ENCODE measurements at regions of chr7 and their contacts with region 1.

Region 1: DNA sequence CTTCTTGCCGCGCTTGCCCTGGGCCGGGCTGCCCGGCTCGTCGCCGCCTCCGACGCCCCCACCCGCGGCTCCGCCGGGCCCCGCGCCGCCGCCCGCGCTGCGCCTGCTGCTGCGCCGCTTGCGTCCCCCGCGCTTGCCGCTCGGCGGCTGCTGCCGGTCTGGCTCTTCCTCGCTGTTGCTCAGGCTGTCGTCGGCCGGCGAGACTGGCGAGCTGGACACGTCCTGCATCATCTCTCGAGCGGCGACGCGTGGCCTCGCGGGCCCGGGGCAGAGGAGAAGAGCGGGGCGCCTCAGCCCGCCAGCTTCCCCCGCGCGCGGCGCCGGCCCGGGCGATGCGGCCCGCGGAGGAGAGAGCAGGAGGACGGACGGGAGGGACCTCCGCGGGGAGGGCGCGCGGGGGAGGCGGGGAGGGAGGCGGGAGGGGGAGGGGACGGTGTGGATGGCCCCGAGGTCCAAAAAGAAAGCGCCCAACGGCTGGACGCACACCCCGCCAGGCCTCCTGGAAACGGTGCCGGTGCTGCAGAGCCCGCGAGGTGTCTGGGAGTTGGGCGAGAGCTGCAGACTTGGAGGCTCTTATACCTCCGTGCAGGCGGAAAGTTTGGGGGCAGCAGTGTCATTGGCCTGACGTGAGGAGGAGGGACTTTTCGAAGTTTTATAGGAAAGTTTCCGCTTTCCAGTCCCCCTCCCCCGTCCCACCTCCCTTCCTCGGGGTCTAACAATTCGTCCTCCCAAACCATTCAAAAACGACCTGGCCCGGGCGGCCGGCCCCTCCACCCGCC is at the start of gene TWIST1:
- DNase-seq: peak; percentile 77
- ATAC-seq: peak; percentile 78
- H3K4me3 ChIP-seq: peak within 1 kb of the TSS; percentile 99
- H3K27ac ChIP-seq: no peak within 1 kb of the TSS
- H3K4me1 ChIP-seq: peaks cover 16% of the 10 kb centered on the region
- H3K27me3 ChIP-seq: no peaks in the 10 kb centered on the region
- CTCF ChIP-seq: no peak
- total RNA-seq, gene TWIST1: 15.7 and 22.3 TPM in 2 replicates

Region 2: GRCh38 chr7:18590744-18591340 is 526.4 kb before region 1 on chr7:
- CTCF ChIA-PET with region 1: no interaction called
- POLR2A ChIA-PET with region 1: interaction called, 27 read pairs
- intact Hi-C with region 1: loop called (anchors 5 kb)
- DNase-seq: peak; percentile 56
- ATAC-seq: peak; percentile 75
- H3K4me3 ChIP-seq: no peak overlapping the region
- H3K27ac ChIP-seq: no peak overlapping the region
- H3K4me1 ChIP-seq: no peaks in the 10 kb centered on the region
- H3K27me3 ChIP-seq: no peaks in the 10 kb centered on the region
- CTCF ChIP-seq: peak; percentile 76

Region 3: GRCh38 chr7:18895456-18895855 is 221.8 kb before region 1 on chr7:
- CTCF ChIA-PET with region 1: no interaction called
- POLR2A ChIA-PET with region 1: no interaction called
- intact Hi-C with region 1: loop called (anchors 2 kb)
- DNase-seq: peak; percentile 89
- ATAC-seq: peak; percentile 80
- H3K4me3 ChIP-seq: peak overlapping the region; percentile 64
- H3K27ac ChIP-seq: peak overlapping the region; percentile 84
- H3K4me1 ChIP-seq: peaks cover 54% of the 10 kb centered on the region
- H3K27me3 ChIP-seq: no peaks in the 10 kb centered on the region
- CTCF ChIP-seq: no peak

Region 4: DNA sequence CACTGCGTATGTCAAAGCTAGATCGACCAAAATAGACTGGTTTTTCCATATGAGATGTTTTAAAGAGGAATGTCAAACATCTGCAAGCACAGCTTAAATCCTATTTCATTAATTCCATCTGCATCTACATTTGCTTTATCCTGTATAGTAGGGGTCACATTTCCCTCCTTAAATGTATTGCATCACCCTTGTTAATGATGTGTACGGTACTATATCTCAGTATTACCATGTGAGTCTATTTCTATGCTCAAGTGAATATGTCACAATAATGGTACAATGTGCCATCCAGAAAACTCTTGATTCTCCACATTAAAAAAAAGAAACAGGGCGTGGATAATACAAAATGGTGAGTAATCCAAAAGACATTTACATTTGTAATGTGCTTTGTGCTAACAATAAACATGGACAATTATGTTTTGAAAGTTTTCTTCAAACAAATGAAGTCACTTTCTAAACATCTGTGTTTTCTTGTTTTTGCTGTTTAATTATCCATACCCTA is 56.5 kb before region 1 on chr7:
- CTCF ChIA-PET with region 1: no interaction called
- POLR2A ChIA-PET with region 1: no interaction called
- intact Hi-C with region 1: loop called (anchors 5 kb)
- DNase-seq: peak; percentile 68
- ATAC-seq: peak; percentile 87
- H3K4me3 ChIP-seq: no peak overlapping the region
- H3K27ac ChIP-seq: no peak overlapping the region
- H3K4me1 ChIP-seq: peaks cover 14% of the 10 kb centered on the region
- H3K27me3 ChIP-seq: no peaks in the 10 kb centered on the region
- CTCF ChIP-seq: no peak

Region 5: GRCh38 chr7:19404912-19405329 is 287.6 kb after region 1 on chr7:
- CTCF ChIA-PET with region 1: interaction called, 3 read pairs
- POLR2A ChIA-PET with region 1: no interaction called
- intact Hi-C with region 1: loop called (anchors 2 kb)
- DNase-seq: peak; percentile 96
- ATAC-seq: peak; percentile 96
- H3K4me3 ChIP-seq: peak overlapping the region; percentile 31; the same call in 1 of the 2 replicates
- H3K27ac ChIP-seq: peak overlapping the region; percentile 72
- H3K4me1 ChIP-seq: peaks cover 34% of the 10 kb centered on the region
- H3K27me3 ChIP-seq: no peaks in the 10 kb centered on the region
- CTCF ChIP-seq: no peak

Region 6: GRCh38 chr7:19552576-19552975 is 435.3 kb after region 1 on chr7:
- CTCF ChIA-PET with region 1: no interaction called
- POLR2A ChIA-PET with region 1: no interaction called
- intact Hi-C with region 1: loop called (anchors 2 kb)
- DNase-seq: no peak
- ATAC-seq: no peak
- H3K4me3 ChIP-seq: no peak overlapping the region
- H3K27ac ChIP-seq: no peak overlapping the region
- H3K4me1 ChIP-seq: 0 out of 2 replicates have a peak, but pooled peaks cover 1% of the 10 kb centered on the region
- H3K27me3 ChIP-seq: no peaks in the 10 kb centered on the region
- CTCF ChIP-seq: no peak